Calu3 (cell line): ENCODE measurements at regions of chr3 and their contacts with region 1.

Region 1: GRCh38 chr3:25782938-25783660 is at the start of gene NGLY1:
- DNase-seq: peak; percentile 87
- H3K4me3 Mint-ChIP-seq: peak within 1 kb of the TSS; percentile 78
- H3K27ac Mint-ChIP-seq: peak within 1 kb of the TSS; percentile 64
- H3K4me1 Mint-ChIP-seq: peaks cover 22% of the 10 kb centered on the region
- H3K27me3 Mint-ChIP-seq: no peaks in the 10 kb centered on the region
- CTCF ChIP-seq: no peak
- total RNA-seq, gene NGLY1: 40.3 and 43.5 TPM in 2 replicates

Region 2: GRCh38 chr3:25664810-25665314 is 118.2 kb before region 1 on chr3 and contains the start of gene TOP2B:
- CTCF ChIA-PET with region 1: no interaction called
- intact Hi-C with region 1: loop called (anchors 5 kb)
- DNase-seq: peak; percentile 94
- H3K4me3 Mint-ChIP-seq: peak within 1 kb of the TSS; percentile 98
- H3K27ac Mint-ChIP-seq: peak within 1 kb of the TSS; percentile 99
- H3K4me1 Mint-ChIP-seq: peaks cover 35% of the 10 kb centered on the region
- H3K27me3 Mint-ChIP-seq: no peaks in the 10 kb centered on the region
- CTCF ChIP-seq: no peak
- total RNA-seq, gene TOP2B: 99.9 and 117 TPM in 2 replicates

Region 3: GRCh38 chr3:25843332-25843731 is 60.2 kb after region 1 on chr3:
- CTCF ChIA-PET with region 1: no interaction called
- intact Hi-C with region 1: no loop called
- DNase-seq: no peak
- H3K4me3 Mint-ChIP-seq: no peak overlapping the region
- H3K27ac Mint-ChIP-seq: no peak overlapping the region
- H3K4me1 Mint-ChIP-seq: no peaks in the 10 kb centered on the region
- H3K27me3 Mint-ChIP-seq: no peaks in the 10 kb centered on the region
- CTCF ChIP-seq: no peak